ENCODE measurements at regions of chr11 and their contacts with region 1.

Region 1: DNA sequence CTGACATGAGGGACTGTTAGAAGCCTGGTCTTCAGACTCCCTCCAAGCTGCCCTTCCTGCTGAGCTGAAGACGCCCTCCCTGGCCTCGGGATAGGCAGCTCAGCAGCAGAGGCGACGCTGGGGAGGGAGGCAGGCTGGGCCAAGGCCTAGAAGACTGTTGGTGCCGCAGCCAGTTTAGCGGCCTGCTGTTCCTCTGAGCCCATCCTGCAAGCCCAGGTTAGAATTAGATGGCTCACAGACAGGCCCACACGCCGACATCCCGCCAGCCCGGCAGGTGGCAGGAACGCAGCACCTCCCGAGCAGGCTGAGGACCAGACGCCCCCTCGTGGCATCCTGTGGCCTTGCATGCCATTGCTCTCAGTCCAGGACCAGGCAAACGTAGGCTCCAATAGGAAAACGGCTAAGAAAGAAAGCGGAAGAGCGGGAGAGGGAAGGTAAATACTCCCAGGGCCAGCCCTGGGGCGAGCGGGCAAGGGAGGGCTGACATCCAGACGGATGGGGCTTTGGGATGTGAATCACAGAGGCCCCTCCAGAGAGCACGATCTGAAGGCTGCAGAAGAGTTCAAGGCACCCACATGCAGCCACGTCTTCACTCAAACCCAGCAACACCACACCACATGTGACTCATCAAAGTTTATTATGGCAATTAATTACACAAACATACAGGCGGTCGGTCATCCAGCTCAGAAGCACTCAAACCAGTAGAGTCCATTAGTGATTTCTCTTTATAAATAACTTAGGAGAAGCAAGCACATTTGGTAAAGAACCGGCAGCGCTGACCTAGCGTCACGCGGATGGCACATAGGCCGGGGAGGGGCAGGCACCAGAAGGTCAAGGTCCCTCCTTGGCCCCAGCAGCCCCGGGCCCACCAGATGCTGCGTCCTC is 27.6 kb downstream of the CD5 start:
- DNase-seq: peak; percentile 96
- H3K4me3 ChIP-seq: peak overlapping the region; percentile 21 to 30; a peak in 2 of 4 replicates
- H3K27ac ChIP-seq: peak overlapping the region; percentile 35 to 51; a peak in 3 of 4 replicates
- H3K4me1 ChIP-seq: peaks cover 0 to 38% of the 10 kb centered on the region in 2 experiments; a peak in 1 of 4 replicates
- H3K27me3 ChIP-seq: no peaks in the 10 kb centered on the region
- CTCF ChIP-seq: peak; percentile 99
- EP300 ChIP-seq: 0 out of 4 replicates have a peak, but pooled peaks of 1 of the 2 experiments have one; percentile 3
- RAD21 ChIP-seq: peak; percentile 95

Region 2: DNA sequence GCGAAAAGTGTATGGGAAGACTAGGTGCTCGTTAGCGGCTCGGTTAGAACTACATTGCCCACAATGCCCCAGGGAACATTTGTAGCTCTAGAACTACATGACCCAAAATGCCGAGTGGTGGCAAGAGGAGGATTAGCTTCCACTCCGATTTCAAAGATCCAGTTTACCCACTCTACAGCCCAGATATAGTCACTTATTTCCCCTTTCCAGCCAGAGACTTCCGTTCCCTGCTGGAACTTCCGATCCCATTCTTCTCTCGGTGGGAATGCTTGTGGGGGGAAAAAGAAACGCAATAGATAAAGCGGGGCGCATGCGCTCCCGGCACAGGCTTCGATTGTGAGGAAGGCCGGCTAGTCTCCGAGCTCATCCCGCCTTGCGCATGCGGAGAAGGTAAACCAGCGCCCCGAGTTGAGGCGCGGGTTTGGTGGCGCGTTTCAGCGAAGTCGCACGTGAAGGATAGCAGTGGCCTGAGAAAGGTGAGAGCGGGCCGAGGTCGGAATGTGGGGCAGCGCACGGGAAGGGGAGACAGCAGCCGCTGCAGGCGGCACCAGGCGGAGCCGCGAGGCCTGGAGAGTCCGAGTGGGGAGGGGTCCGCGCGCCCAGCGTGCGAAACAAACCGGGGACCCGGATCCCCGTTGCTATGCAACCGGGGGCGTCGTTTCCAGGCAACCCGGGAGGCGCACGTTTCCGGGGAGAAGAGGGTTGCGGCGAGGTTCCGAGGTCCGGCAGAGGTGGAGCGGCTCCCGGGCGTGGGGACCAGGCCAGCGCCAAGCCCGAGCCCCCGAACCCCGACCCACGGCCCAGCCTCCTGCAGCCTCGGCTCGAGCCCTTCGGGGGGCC is 215.9 kb before region 1 on chr11 and contains the start of gene TMEM109:
- CTCF ChIA-PET with region 1: interaction called, 38 read pairs
- POLR2A ChIA-PET with region 1: no interaction called
- DNase-seq: peak; percentile 94
- H3K4me3 ChIP-seq: peak within 1 kb of the TSS; percentile 80 to 87
- H3K27ac ChIP-seq: peak within 1 kb of the TSS; percentile 93 to 100
- H3K4me1 ChIP-seq: peaks cover 12 to 20% of the 10 kb centered on the region in 2 experiments; a peak in 2 of 4 replicates
- H3K27me3 ChIP-seq: no peaks in the 10 kb centered on the region; the same call in 1 of the 2 replicates
- CTCF ChIP-seq: no peak
- EP300 ChIP-seq: no peak
- RAD21 ChIP-seq: no peak
- polyA plus RNA-seq, gene TMEM109: 38.0 and 52.7 TPM in 2 replicates

Region 3: DNA sequence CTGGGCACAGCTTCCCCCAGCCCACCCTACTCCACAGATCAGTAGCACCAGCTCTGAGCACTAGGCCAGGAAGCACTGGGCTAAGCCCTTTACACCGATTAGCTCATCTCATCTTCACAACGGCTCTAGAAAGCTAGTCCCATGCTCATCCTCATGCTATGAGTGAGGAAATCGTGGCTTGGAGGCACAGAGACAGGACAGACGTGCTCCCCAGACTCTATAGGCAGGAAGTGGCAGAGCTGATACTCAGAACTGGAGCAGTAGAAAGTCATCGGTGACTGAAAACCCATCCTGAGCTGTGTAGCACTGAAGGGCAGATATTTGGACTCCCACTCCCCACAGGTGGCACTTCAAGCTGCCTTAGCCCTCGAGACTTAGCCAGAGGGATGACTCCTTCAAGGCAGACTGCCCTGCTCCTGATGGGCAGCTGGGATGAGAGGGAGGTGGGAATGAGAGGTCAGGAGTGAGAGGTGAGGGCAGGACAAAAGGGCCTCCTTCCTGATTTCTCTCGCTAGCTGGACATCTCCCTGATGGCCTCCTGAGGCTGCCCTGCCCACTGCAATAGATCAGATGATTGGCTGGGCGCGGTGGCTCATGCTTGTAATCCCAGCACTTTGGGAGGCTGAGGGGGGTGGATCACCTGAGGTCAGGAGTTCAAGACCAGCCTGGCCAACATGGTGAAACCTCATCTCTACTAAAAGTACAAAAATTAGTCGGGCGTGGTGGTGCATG is 17.9 kb before region 1 on chr11:
- CTCF ChIA-PET with region 1: interaction called, 16 read pairs
- POLR2A ChIA-PET with region 1: no interaction called
- DNase-seq: no peak
- H3K4me3 ChIP-seq: no peak overlapping the region
- H3K27ac ChIP-seq: no peak overlapping the region
- H3K4me1 ChIP-seq: no peaks in the 10 kb centered on the region; a peak in 1 of 4 replicates
- H3K27me3 ChIP-seq: no peaks in the 10 kb centered on the region
- CTCF ChIP-seq: no peak
- EP300 ChIP-seq: no peak
- RAD21 ChIP-seq: no peak

Region 4: DNA sequence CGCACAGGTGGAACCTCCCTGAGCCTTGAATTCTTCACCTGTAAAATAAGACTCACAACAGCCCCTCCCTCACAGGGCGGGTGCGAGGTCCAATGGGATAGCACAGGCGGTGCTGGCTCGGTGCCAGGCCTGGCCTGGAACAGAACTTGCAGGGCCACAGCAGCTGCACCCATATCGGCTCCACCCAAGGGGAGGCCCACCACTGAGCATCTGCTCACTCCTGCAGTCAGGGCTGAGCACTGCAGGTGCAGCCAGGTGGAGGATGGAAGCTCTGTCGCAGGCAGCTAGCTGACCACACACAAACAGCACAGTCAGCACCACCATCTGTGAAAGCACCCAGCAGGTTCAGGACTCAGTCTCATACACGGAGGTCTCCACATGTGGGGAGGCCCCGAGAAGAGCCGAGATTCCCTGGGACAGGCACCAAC is 11.7 kb after region 1 on chr11:
- CTCF ChIA-PET with region 1: interaction called, 36 read pairs
- POLR2A ChIA-PET with region 1: no interaction called
- DNase-seq: no peak
- H3K4me3 ChIP-seq: no peak overlapping the region
- H3K27ac ChIP-seq: no peak overlapping the region
- H3K4me1 ChIP-seq: peaks cover 0 to 4% of the 10 kb centered on the region in 2 experiments; a peak in 2 of 4 replicates
- H3K27me3 ChIP-seq: no peaks in the 10 kb centered on the region
- CTCF ChIP-seq: no peak
- EP300 ChIP-seq: no peak
- RAD21 ChIP-seq: no peak

Region 5: DNA sequence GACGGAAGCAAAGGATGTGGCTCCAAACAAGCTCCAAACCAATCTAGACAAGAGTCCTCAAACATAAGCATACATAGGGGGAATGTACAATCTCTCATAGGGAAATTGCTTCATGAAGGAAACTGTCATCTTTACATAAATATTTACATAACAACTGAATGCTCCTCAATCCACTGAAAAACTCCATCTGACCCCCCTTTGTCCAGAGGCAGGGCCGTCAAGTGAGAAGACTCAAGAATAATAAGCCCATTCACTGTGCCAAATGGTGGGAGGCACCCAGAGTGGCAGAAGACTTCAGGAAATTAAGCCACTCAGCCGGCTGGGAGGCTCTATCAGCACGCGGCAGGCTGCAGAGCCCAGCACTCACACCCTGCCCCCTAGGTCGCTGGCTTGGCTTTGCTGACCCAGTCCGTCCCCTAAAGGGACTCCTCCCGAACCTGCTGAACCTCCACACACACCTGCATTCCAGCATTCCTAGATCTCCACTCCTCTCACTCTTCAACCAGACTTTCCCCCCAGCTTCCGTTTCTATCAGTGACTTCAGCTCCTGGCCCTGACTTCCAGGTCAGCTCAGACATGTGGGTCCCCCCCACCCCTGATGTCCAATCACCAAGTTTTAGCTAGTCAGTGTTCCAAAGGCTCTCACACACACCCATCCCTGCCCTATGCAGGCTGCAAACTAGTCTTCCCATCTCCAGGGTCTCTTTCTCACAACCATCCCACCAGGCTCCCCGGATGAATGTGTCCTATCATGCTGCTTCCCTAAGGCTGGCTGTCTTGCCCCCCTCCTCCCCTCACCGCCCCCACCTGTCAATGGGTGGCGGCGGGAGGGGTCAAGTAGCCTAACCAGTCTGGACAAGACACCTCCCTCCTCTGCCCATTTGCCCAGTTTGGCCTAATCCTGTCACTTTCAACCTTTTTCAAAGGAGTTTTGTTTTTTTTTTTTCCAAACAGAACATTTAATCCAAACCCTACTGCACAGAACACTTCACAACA is 20.0 kb after region 1 on chr11:
- CTCF ChIA-PET with region 1: interaction called, 21 read pairs
- POLR2A ChIA-PET with region 1: no interaction called
- DNase-seq: no peak
- H3K4me3 ChIP-seq: no peak overlapping the region
- H3K27ac ChIP-seq: peak overlapping the region in 1 of 2 experiments; percentile 39; a peak in 1 of 4 replicates
- H3K4me1 ChIP-seq: peaks cover 8 to 41% of the 10 kb centered on the region in 2 experiments; a peak in 3 of 4 replicates
- H3K27me3 ChIP-seq: no peaks in the 10 kb centered on the region
- CTCF ChIP-seq: no peak
- EP300 ChIP-seq: no peak
- RAD21 ChIP-seq: no peak